ENCODE measurements at regions of chr22 and their contacts with region 1.

Region 1: DNA sequence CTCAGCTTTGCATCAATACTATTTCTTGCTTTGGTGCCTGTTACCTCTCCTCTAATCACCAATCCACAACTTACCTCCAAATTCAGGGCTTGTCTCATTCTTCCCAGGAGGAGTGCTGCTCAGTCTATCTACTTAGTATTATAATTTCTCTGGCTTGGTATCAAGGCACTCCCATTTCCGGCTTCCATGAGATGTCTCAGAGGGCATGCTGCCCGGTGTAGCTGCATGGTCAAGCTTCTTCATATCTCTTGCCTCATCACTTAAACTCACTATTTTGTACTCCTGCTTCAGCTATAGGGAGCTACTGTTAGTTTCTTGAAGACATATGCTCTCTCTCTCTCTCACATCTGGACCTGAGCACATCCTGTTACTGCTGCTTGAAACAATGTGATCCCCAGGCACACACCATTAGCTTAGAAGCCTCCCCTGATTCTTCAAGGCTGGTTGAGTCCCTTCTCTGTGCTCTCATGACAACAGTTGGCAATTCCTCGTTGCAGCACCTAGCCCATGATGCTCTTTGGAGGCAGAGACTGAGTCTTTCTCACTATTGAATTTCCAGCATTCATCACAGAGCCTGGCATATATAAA is 182.8 kb upstream of the SYN3 start:
- DNase-seq: peak; percentile 62
- H3K4me3 ChIP-seq: no peak overlapping the region
- H3K27ac ChIP-seq: peak overlapping the region; percentile 23
- H3K4me1 ChIP-seq: peaks cover 45% of the 10 kb centered on the region
- CTCF ChIP-seq: no peak

Region 2: DNA sequence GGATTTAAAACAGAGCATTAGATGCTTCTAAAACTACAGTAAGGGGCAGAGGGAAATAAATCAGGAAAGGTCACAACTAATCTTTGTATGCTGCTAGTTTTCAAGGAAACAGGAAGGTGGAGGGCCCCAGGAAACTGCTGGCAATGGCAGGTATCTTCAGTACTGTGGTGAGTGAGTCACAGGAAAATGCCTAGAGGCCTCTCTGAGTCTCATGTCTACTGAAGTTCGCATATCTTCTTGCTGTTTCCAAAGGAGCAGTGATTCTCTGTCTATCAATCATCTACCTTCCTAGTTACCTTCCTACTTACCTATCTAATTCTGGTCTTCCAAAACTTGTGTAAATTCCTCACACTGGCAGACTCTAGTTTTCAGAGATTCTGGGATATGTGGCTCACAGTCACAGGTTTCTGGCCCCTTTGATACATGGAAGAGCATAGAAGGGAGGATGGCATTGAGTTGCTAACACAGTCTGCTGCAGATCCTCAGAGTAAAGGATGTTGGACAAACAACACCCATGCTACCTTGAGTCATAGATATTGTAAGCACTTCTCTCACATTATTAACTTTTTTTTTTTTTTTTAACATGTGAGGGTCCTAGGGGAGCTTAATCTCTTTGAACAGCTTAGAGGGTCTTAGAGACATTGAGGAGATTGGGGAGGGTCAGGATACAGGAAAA is 124.0 kb before region 1 on chr22:
- CTCF ChIA-PET with region 1: no interaction called
- POLR2A ChIA-PET with region 1: no interaction called
- intact Hi-C with region 1: no loop called
- DNase-seq: peak; percentile 20
- H3K4me3 ChIP-seq: no peak overlapping the region
- H3K27ac ChIP-seq: no peak overlapping the region
- H3K4me1 ChIP-seq: peaks cover 40% of the 10 kb centered on the region
- CTCF ChIP-seq: no peak

Region 3: DNA sequence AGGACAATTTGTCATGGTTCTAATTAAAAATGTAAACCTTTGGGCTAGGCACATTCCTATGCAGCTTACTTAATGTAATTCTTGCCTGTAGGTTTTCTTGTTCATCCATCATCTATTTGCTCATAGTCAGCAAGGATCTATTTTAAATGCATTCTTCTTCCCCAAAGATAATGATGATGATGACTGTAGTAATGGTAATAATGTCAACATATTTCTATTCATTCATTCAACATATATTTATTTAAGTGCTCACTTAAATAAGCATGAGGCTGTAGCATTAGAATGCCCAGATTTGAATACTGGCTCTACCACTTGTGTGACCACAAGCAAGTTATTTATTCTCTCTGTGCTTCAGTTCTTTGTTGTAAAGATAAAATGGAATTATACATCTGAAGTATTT is 13.2 kb before region 1 on chr22:
- CTCF ChIA-PET with region 1: interaction called, 3 read pairs
- POLR2A ChIA-PET with region 1: interaction called, 13 read pairs
- intact Hi-C with region 1: no loop called
- DNase-seq: no peak
- H3K4me3 ChIP-seq: no peak overlapping the region
- H3K27ac ChIP-seq: no peak overlapping the region
- H3K4me1 ChIP-seq: peaks cover 4% of the 10 kb centered on the region
- CTCF ChIP-seq: no peak